WTC11 (cell line): ENCODE measurements at regions of chr17 and their contacts with region 1.

Region 1: GRCh38 chr17:79839363-79840268 is at the start of gene CBX4:
- DNase-seq: peak; percentile 91
- ATAC-seq: peak; percentile 24
- H3K4me3 Mint-ChIP-seq: peak within 1 kb of the TSS; percentile 72
- H3K27ac Mint-ChIP-seq: no peak within 1 kb of the TSS; the same call in 1 of the 2 replicates
- H3K4me1 Mint-ChIP-seq: peaks cover 31% of the 10 kb centered on the region
- H3K27me3 Mint-ChIP-seq: peaks cover 89% of the 10 kb centered on the region
- CTCF ChIP-seq: peak; percentile 57
- total RNA-seq, gene CBX4: 3.2 to 3.9 TPM (median 3.3 TPM) in 3 replicates

Region 2: DNA sequence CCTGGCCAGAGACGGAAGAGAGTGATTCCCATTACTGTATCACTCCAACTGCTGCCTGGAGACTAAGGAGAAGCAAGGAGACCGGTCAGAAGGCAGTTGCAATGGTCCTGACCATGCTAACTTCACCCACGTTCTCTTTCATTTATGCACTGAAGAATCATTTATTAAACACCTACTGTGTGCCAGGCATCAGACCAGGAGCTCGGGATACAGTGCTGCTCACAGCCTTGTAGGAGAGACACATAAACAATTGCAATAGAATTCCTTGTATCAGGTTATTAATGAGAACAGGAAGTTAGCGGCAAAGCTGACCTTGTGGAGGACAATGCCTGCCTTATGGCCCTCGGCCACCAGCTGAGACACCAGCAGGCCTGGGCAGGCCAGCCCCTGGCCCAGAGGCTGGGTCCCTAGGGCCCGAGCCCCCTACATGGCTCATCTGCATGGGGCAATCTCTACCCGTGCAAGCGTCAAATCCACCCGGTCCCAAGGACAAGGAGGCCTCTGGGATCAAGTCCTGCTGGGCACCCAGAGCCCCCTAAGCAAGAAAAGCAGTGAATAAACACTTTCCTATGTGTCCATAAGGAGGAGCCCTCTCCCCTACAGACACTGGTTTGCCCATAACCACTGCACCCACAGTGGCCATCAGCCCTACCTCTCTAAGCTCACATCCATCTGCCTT is 117.5 kb before region 1 on chr17:
- CTCF ChIA-PET with region 1: interaction called, 10 read pairs
- POLR2A ChIA-PET with region 1: no interaction called
- DNase-seq: peak; percentile 31
- ATAC-seq: peak; percentile 96
- H3K4me3 Mint-ChIP-seq: no peak overlapping the region
- H3K27ac Mint-ChIP-seq: no peak overlapping the region
- H3K4me1 Mint-ChIP-seq: peaks cover 8% of the 10 kb centered on the region; the same call in 1 of the 2 replicates
- H3K27me3 Mint-ChIP-seq: peaks cover 4% of the 10 kb centered on the region; the same call in 1 of the 2 replicates
- CTCF ChIP-seq: peak; percentile 27; the same call in 1 of the 2 replicates

Region 3: GRCh38 chr17:79789534-79790353 is 49.9 kb before region 1 on chr17:
- CTCF ChIA-PET with region 1: interaction called, 119 read pairs
- POLR2A ChIA-PET with region 1: interaction called, 7 read pairs
- DNase-seq: peak; percentile 82
- ATAC-seq: peak; percentile 50
- H3K4me3 Mint-ChIP-seq: peak overlapping the region; percentile 65
- H3K27ac Mint-ChIP-seq: no peak overlapping the region
- H3K4me1 Mint-ChIP-seq: peaks cover 48% of the 10 kb centered on the region
- H3K27me3 Mint-ChIP-seq: peaks cover 83% of the 10 kb centered on the region
- CTCF ChIP-seq: peak; percentile 65

Region 4: DNA sequence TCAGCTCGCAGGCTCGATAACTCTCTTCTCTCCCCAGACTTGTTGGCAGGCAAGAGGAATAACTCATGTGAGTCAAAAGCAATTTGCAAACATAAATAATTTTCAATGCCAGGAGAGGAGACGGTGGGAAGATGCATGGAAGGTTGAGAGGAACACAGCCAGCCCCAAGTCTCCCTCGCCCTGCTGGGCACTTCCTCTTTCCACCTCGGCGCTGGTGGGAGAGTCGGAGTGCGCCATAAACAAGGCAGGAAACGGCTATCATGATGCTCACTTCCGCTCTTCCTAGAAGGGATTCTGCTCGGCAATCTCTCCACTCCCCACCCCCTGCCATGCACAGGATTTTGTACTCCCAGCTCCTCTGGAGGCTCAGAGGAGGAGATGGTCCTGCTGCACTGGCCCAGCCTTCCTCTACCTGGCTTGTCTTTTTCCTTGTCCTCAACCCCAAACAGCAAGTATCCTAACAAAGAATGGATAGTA is 13.4 kb before region 1 on chr17:
- CTCF ChIA-PET with region 1: interaction called, 464 read pairs
- POLR2A ChIA-PET with region 1: interaction called, 4 read pairs
- DNase-seq: no peak
- ATAC-seq: no peak
- H3K4me3 Mint-ChIP-seq: no peak overlapping the region
- H3K27ac Mint-ChIP-seq: no peak overlapping the region
- H3K4me1 Mint-ChIP-seq: peaks cover 19% of the 10 kb centered on the region
- H3K27me3 Mint-ChIP-seq: peaks cover 98% of the 10 kb centered on the region
- CTCF ChIP-seq: no peak

Region 5: DNA sequence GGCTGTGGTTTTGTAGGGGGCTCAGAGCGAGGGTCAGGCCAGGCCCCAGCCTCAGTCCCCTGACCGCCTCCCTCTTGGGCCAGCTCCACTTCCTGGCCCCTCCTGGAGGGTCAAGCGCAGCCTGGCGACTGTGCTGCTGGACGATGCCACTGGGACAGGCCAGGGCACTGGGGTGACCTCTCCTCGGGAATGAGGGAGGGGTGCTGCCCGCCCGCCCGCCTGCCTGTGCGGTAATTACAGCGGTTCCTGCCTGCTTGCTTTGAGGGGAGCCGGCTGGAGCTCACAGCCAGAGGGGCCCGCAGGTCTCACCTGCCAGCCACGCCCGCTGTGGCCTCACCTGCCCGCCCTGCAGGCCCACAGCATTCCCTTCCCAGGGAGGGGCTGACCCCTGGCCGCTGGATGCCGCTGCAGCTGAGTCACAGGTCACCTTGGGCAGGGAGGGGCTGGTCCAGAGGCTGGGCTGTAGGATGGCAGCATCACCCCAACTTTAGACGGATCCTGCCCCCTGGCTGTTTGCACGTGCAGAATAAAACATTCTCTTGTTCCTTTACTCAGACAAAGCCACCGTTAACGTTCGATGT is 76.3 kb after region 1 on chr17:
- CTCF ChIA-PET with region 1: interaction called, 27 read pairs
- POLR2A ChIA-PET with region 1: no interaction called
- DNase-seq: peak; percentile 72
- ATAC-seq: peak; percentile 76
- H3K4me3 Mint-ChIP-seq: no peak overlapping the region
- H3K27ac Mint-ChIP-seq: no peak overlapping the region
- H3K4me1 Mint-ChIP-seq: peaks cover 4% of the 10 kb centered on the region; the same call in 1 of the 2 replicates
- H3K27me3 Mint-ChIP-seq: no peaks in the 10 kb centered on the region
- CTCF ChIP-seq: no peak

Region 6: DNA sequence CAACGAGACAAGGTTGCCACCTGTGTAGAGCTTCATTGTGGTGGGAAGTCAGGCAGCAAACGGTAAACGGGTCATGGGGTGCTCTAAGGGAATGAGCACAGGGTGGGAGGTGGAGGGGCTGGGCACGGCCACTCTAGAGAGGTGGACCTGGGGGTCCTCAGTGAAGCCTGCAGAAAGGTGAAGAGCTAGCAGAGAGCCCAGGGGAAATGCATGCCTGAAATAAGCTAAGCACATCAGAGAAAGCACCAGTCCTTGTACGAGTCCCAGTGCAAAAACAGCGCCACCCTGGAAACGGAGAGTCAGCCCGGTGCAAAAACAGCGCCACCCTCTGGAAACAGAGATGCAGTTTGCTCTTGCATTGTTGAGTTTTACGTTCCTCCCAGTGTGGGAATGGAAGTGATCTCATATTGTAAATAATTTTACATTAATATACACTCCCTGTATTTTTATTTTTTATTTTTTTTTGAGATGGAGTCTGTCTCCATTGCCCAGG is 131.0 kb after region 1 on chr17:
- CTCF ChIA-PET with region 1: interaction called, 24 read pairs
- POLR2A ChIA-PET with region 1: interaction called, 4 read pairs
- DNase-seq: peak; percentile 66
- ATAC-seq: peak; percentile 58
- H3K4me3 Mint-ChIP-seq: no peak overlapping the region
- H3K27ac Mint-ChIP-seq: no peak overlapping the region
- H3K4me1 Mint-ChIP-seq: peaks cover 27% of the 10 kb centered on the region
- H3K27me3 Mint-ChIP-seq: no peaks in the 10 kb centered on the region
- CTCF ChIP-seq: peak; percentile 75

Region 7: DNA sequence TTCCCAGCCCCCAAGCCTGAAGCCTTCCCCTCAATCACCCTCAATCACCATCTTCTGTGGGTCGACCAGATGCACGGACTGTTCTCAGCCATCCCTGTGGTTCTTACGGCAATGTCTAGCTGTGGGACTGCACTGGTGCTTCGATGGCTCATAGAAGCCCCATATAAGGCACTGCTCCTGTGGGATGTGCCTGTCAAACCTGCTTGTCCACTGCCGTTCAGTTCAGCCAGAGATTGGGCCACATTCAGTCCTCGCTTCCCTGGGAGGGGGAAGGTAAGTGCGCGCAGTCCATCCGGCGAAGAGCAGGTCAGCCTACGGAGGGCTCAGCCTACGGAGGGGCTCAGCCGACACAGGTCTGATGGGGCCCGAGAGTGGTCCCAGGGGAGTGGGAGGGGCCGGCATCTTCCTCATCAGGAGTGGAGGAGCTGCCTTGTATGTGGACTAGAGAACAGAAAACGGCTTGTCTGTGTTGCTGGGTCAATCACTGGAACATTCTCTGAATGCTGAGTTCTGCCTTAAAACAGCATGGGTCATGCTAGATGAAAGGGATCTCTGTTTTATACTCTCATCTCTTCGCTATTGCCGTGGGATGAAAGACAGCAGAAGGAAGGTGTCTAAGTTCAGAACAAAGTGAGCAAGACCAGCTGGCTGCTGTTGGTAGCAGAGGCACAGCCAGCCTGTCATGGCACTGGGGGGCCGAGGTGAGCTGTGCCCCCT is 330.3 kb after region 1 on chr17 and contains the start of gene CARD14:
- CTCF ChIA-PET with region 1: no interaction called
- POLR2A ChIA-PET with region 1: no interaction called
- DNase-seq: no peak
- ATAC-seq: no peak
- H3K4me3 Mint-ChIP-seq: no peak within 1 kb of the TSS
- H3K27ac Mint-ChIP-seq: no peak within 1 kb of the TSS
- H3K4me1 Mint-ChIP-seq: peaks cover 4% of the 10 kb centered on the region; the same call in 1 of the 2 replicates
- H3K27me3 Mint-ChIP-seq: no peaks in the 10 kb centered on the region
- CTCF ChIP-seq: no peak
- total RNA-seq, gene CARD14: 0.18 to 0.83 TPM (median 0.25 TPM) in 3 replicates